Heart right ventricle (tissue), 16 donors: ENCODE measurements at regions of chr21 and their contacts with region 1.

Region 1: GRCh38 chr21:15001857-15002606 is 62.8 kb downstream of the NRIP1 start:
- DNase-seq: no peak
- ATAC-seq: no peak
- H3K4me3 ChIP-seq: no peak overlapping the region
- H3K27ac ChIP-seq: no peak overlapping the region
- H3K4me1 ChIP-seq: peaks cover 0 to 66% (median 46%) of the 10 kb centered on the region in 9 donors
- H3K27me3 ChIP-seq: no peaks in the 10 kb centered on the region
- CTCF ChIP-seq: no peak

Region 2: DNA sequence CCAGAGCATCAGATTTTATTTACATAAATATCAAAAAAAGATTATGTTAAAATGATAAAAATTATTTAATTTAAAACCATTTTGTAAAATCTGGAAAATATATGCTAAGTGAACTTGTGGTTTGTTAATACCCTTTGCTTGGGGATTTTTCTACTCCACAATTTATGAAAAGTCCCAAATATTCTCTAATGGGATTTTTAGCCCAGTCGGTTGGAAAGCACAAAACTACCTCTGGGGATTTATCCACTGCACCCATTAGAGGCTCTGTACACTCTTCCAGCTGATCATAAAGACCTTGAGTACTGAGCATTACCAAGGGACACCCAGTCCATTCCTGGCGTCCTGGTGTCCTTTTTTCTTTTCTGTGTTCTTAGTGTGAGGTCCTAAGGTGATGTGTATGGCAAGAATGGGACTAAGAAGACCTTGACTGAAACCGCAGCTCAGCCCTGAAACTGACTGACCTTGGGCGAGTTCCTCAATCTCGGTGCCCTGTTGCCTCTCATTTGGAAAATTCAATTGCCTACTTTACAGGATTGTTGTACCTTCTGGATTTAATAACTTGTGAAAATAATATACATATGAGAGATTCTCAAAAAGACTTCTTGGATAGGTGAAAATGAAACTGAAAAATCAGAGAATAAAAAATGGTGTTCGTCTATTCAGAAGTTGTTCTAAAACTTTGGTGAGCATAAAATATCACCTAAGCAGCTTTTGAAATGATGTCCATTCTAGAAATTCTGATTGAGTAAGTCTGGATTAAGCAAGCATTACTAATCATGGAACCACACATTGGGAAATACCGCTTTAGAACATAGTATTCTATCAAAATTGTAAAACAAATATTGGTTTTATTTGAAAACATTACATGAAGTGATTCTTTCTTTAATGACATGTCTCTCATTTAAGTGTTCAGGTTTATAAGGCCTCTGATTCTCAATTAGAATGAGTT is 434.4 kb before region 1 on chr21:
- intact Hi-C with region 1: no loop called
- DNase-seq: no peak
- ATAC-seq: no peak
- H3K4me3 ChIP-seq: no peak overlapping the region
- H3K27ac ChIP-seq: peak overlapping the region in 1 of 10 donors; percentile 54
- H3K4me1 ChIP-seq: peaks cover 0 to 29% (median 0%) of the 10 kb centered on the region in 9 donors
- H3K27me3 ChIP-seq: no peaks in the 10 kb centered on the region
- CTCF ChIP-seq: no peak

Region 3: DNA sequence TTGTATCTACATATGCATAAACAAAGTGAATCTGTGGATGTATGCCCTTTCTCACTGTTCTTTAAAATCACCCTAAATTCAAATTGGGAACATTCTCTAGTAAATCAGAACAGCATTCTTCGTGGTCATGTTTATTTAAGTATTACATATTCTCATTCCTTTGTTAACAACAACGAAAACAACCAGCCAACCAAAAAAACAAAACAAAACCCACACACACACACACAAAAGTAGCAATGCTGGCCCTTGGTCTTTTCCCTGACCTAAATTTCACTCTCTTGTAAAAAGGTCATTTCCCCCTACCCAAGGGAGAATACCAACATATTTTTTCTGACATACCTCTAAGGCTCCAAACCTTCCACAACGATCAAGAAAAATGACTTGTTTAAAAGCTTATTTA is 39.8 kb before region 1 on chr21:
- intact Hi-C with region 1: loop called in 1 of 10 experiments (anchors 2 kb)
- DNase-seq: no peak
- ATAC-seq: no peak
- H3K4me3 ChIP-seq: no peak overlapping the region
- H3K27ac ChIP-seq: no peak overlapping the region
- H3K4me1 ChIP-seq: no peaks in the 10 kb centered on the region
- H3K27me3 ChIP-seq: no peaks in the 10 kb centered on the region
- CTCF ChIP-seq: no peak

Region 4: DNA sequence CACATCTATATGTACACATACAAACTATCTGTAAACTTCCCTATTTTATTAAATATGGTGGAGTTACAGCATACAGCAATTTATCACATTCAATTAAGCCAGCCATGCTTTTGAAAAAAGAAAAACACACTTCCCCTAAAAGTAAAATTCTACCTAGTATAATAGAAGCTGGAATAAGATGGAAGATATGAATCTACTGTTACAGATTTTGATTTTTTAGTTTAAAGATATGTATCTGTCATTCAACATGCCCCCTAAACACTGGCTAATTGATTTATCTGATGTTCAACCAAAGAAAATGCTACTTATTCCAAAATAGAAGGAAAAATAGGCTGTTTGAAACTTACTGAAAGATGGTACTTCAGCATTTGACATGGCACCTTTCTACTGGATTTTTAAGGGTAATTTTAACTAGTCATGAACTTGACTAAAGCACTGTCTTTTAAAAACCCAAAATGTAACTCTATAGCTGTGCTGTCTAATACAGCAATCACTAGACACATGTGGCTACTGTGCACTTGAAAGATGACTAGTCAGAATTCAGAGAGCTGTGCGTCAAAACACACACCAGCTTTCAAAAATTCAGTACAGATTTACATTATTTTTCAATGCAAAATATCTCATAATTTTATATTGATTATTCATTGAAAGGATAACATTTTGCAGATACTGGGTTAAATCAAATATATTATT is 37.7 kb after region 1 on chr21:
- intact Hi-C with region 1: loop called in 1 of 10 experiments (anchors 5 kb)
- DNase-seq: no peak
- ATAC-seq: no peak
- H3K4me3 ChIP-seq: no peak overlapping the region
- H3K27ac ChIP-seq: no peak overlapping the region
- H3K4me1 ChIP-seq: peaks cover 0 to 28% (median 10%) of the 10 kb centered on the region in 9 donors
- H3K27me3 ChIP-seq: no peaks in the 10 kb centered on the region
- CTCF ChIP-seq: no peak

Region 5: GRCh38 chr21:15051644-15052458 is 49.8 kb after region 1 on chr21:
- intact Hi-C with region 1: loop called in 1 of 10 experiments (anchors 10 kb)
- DNase-seq: no peak
- ATAC-seq: peak in 1 of 8 donors; percentile 59
- H3K4me3 ChIP-seq: no peak overlapping the region
- H3K27ac ChIP-seq: peak overlapping the region in 1 of 10 donors; percentile 8
- H3K4me1 ChIP-seq: peaks cover 3 to 94% (median 79%) of the 10 kb centered on the region in 9 donors
- H3K27me3 ChIP-seq: no peaks in the 10 kb centered on the region
- CTCF ChIP-seq: no peak